Panc1 (cell line): ENCODE measurements at regions of chr5 and their contacts with region 1.

Region 1: DNA sequence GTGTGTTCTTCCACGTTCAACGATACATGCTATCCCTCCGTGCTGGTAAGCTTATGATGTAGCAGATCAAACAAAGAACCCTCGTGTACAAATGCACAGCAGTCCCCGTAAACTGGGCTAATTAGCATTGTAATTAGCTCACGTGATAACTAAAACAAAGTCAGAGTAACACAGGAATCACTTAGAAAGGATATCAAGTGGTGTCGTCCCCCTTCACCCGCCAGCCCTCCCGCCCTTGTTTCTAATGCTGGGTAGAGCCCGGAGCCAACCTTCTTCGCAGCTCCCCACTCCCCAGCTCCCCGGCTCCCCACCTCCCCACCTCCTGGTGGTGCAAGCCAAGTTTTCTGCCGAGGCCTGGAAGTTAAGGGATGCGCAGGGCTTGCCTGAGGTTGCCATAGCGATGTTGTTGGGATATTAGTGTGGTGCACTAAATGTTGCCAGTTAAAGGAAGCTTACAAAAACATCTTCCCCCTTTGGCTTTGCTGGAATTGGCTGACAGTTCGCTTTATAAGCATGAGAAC is 357.9 kb upstream of the CCNH start:
- DNase-seq: no peak
- ATAC-seq: no peak
- H3K4me3 ChIP-seq: no peak overlapping the region
- H3K27ac ChIP-seq: no peak overlapping the region
- H3K4me1 ChIP-seq: no peaks in the 10 kb centered on the region
- H3K27me3 ChIP-seq: no peaks in the 10 kb centered on the region
- CTCF ChIP-seq: no peak

Region 2: DNA sequence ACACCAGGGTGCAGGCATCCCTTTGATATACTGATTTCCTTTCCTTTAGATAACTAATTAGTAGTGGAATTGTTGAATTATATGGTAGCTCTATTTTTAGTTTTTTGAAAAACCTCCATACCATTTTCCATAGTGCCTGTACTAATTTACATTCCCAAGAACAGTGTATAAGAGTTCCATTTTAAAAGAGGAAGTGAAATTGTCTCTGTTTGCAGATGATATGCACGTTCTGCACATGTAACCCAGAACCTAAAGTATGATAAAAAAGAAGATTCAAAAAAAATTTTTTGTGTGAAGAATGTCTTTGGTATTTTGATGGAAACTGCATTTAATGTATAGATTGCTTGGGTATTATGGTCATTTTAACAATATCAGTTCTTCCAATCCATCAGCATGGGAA is 66.0 kb after region 1 on chr5:
- CTCF ChIA-PET with region 1: no interaction called
- POLR2A ChIA-PET with region 1: no interaction called
- in situ Hi-C with region 1: no loop called
- intact Hi-C with region 1: no loop called
- DNase-seq: no peak
- ATAC-seq: no peak
- H3K4me3 ChIP-seq: no peak overlapping the region
- H3K27ac ChIP-seq: no peak overlapping the region
- H3K4me1 ChIP-seq: no peaks in the 10 kb centered on the region
- H3K27me3 ChIP-seq: no peaks in the 10 kb centered on the region
- CTCF ChIP-seq: no peak

Region 3: GRCh38 chr5:88690409-88691229 is 920.0 kb after region 1 on chr5:
- CTCF ChIA-PET with region 1: no interaction called
- POLR2A ChIA-PET with region 1: no interaction called
- in situ Hi-C with region 1: loop called (anchors 25 kb)
- intact Hi-C with region 1: no loop called
- DNase-seq: no peak
- ATAC-seq: peak; percentile 92
- H3K4me3 ChIP-seq: peak overlapping the region; percentile 30 to 56
- H3K27ac ChIP-seq: no peak overlapping the region
- H3K4me1 ChIP-seq: peaks cover 10% of the 10 kb centered on the region; the same call in 1 of the 2 replicates
- H3K27me3 ChIP-seq: peaks cover 3% of the 10 kb centered on the region
- CTCF ChIP-seq: peak; percentile 99